ENCODE measurements at regions of chr5 and their contacts with region 1.

Region 1: GRCh38 chr5:160021831-160022446 is 13.0 kb downstream of the TTC1 start:
- DNase-seq: peak; percentile 62
- H3K4me3 ChIP-seq: no peak overlapping the region
- H3K27ac ChIP-seq: peak overlapping the region in 2 of 4 donors; percentile 8 to 21
- H3K4me1 ChIP-seq: peaks cover 0 to 26% (median 11%) of the 10 kb centered on the region in 4 donors
- H3K27me3 ChIP-seq: no peaks in the 10 kb centered on the region
- CTCF ChIP-seq: peak; percentile 73 to 91 (median 82)
- EP300 ChIP-seq: no peak
- POLR2A ChIP-seq: no peak

Region 2: DNA sequence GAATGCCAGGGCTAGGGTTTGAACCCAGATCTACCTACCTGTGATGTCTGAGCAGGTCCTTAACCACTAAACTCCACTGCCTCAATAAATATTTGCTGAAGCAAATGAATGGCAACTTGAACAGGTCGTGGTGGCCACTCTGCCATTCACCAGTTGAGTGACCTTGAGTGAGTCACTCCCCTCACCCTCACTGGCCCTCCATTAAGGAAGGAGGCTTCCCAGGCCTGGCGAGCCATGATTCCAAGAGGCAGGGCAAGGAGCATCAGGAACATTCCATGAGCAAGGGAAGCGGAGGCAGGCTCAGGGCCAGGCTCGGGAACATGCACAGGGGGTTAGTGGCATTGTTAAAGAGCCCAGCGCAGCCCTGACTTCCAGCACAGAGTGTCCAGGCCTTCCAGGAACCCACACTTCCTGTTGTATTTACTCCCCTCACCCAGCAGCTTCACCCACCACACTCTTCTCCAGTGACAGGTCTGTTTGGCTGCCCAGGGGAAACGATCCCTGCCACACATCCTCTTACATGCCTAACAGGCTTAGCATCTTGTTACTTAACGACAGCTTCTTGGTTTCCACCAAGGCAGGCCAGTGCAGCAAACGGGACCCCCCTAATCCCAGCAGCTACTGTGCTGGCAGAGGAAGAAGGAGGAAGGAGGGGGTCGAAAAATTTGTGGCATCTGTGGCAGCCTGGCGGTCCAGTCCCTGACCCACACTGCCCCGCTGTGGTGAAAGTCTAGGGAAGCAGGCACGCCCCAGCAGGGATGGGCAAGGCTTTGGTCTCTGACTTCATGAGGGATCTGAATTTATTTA is 56.7 kb before region 1 on chr5:
- in situ Hi-C with region 1: no loop called
- intact Hi-C with region 1: no loop called
- DNase-seq: peak; percentile 50
- H3K4me3 ChIP-seq: no peak overlapping the region
- H3K27ac ChIP-seq: no peak overlapping the region
- H3K4me1 ChIP-seq: no peaks in the 10 kb centered on the region
- H3K27me3 ChIP-seq: peaks cover 15% of the 10 kb centered on the region
- CTCF ChIP-seq: peak; percentile 42 to 63 (median 54)
- EP300 ChIP-seq: no peak
- POLR2A ChIP-seq: no peak

Region 3: GRCh38 chr5:160119905-160120266 is 97.9 kb after region 1 on chr5:
- in situ Hi-C with region 1: loop called in 1 of 4 experiments (anchors 10 kb)
- intact Hi-C with region 1: no loop called
- DNase-seq: no peak
- H3K4me3 ChIP-seq: peak overlapping the region in 1 of 4 donors; percentile 38
- H3K27ac ChIP-seq: peak overlapping the region; percentile 28 to 60 (median 36)
- H3K4me1 ChIP-seq: peaks cover 0 to 25% (median 13%) of the 10 kb centered on the region in 4 donors
- H3K27me3 ChIP-seq: no peaks in the 10 kb centered on the region
- CTCF ChIP-seq: peak; percentile 19 to 63 (median 29)
- EP300 ChIP-seq: no peak
- POLR2A ChIP-seq: no peak